Naive thymus-derived CD8-positive, alpha-beta T cell (primary cell): ENCODE measurements at regions of chr1 and their contacts with region 1.

Region 1: GRCh38 chr1:45011837-45012638 is at the start of gene UROD:
- DNase-seq: peak; percentile 75 to 95 (median 88)
- ATAC-seq: peak; percentile 75 to 83
- H3K4me3 Mint-ChIP-seq: peak within 1 kb of the TSS; percentile 81 to 97 (median 93)
- H3K27ac Mint-ChIP-seq: peak within 1 kb of the TSS; percentile 87 to 99 (median 95)
- H3K4me1 Mint-ChIP-seq: peaks cover 21 to 56% (median 49%) of the 10 kb centered on the region in 4 donors
- H3K27me3 Mint-ChIP-seq: no peaks in the 10 kb centered on the region
- polyA plus RNA-seq, gene UROD: 71.6 to 80.9 (median 74.9) TPM

Region 2: DNA sequence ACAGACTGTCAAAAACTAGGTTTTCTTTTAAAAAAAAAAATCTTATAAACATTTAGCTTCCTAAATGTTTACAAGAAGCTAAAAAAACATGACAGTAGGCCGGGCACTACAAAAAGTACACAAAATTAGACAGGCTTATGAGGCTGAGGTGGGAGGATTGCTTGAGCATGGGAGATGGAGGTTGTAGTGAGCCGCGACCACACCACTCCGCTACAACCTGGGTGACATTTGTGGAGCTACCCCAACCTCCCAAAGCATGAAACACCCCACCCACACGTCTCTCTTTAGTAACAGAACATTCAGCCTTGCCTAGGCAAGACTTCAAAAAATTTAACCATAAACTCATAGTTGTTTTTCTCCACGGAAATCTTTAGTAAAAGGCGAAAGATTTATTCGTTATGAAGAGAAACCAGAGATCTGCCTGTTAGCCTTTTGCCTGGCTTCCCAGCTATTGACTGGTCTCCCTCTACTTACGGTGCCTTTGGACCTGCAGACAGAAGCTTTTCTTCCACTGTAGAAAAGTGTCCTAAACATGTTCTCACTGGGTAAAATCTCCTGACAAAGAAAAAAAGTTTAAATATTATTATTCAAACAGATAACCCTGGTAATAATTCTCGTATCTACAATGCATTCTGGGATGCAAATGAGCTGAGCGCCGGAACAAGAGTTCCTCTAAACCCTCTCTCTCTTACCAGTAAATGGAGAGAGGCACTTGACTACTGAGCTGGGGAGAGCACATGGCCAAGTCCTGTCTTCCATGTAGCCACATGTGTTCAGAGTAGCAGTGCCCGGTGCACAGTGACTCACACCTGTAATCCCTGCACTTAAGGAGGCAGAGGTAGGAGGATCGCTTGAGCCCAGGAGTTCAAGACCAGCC is 290.3 kb before region 1 on chr1:
- POLR2A ChIA-PET with region 1: interaction called, 17 read pairs
- DNase-seq: peak; percentile 17 to 85 (median 74)
- ATAC-seq: peak; percentile 84 to 90
- H3K4me3 Mint-ChIP-seq: peak overlapping the region; percentile 42 to 85 (median 79)
- H3K27ac Mint-ChIP-seq: peak overlapping the region; percentile 93 to 99 (median 96)
- H3K4me1 Mint-ChIP-seq: peaks cover 50 to 80% (median 78%) of the 10 kb centered on the region in 4 donors
- H3K27me3 Mint-ChIP-seq: no peaks in the 10 kb centered on the region

Region 3: GRCh38 chr1:44786138-44786840 is 225.7 kb before region 1 on chr1:
- POLR2A ChIA-PET with region 1: interaction called, 35 read pairs
- DNase-seq: peak; percentile 64 to 91 (median 79)
- ATAC-seq: peak; percentile 75 to 77
- H3K4me3 Mint-ChIP-seq: peak overlapping the region; percentile 69 to 84 (median 80)
- H3K27ac Mint-ChIP-seq: peak overlapping the region; percentile 35 to 95 (median 88)
- H3K4me1 Mint-ChIP-seq: peaks cover 16 to 34% (median 30%) of the 10 kb centered on the region in 4 donors
- H3K27me3 Mint-ChIP-seq: no peaks in the 10 kb centered on the region

Region 4: DNA sequence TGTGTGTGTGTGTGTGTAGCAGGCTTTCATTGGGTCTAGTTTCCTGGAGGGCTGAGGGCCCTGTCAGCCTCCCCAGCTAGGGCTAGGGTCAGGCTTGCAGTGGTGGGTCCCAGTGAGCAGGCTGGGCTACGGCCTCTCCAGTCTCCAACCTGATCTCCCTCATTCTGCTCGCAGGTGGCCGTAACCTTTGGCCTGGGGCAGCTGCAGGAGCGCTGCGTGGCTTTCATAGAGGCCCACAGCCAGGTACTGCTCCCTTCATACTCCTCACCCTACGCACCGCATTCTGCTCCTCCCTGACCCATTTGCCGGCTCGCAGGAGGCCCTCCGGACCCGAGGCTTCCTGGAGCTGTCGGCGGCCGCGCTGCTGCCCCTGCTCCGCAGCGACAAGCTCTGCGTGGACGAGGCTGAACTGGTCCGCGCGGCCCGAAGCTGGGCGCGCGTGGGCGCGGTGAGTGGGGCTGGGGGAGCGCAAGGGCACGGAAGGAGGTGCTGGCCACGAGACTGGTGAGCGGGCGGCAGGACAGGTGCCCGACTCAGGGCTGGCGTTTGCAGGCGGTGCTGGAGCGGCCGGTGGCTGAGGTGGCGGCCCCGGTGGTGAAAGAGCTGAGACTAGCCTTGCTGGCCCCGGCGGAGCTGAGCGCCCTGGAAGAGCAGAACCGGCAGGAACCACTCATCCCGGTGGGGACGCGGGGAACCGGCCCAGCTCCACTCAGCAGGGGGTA is 199.1 kb before region 1 on chr1:
- POLR2A ChIA-PET with region 1: interaction called, 24 read pairs
- DNase-seq: peak in 1 of 10 donors; percentile 45
- ATAC-seq: no peak
- H3K4me3 Mint-ChIP-seq: peak overlapping the region in 5 of 10 donors; percentile 6 to 91 (median 30)
- H3K27ac Mint-ChIP-seq: peak overlapping the region in 9 of 10 donors; percentile 37 to 100 (median 99)
- H3K4me1 Mint-ChIP-seq: peaks cover 34 to 75% (median 72%) of the 10 kb centered on the region in 4 donors
- H3K27me3 Mint-ChIP-seq: no peaks in the 10 kb centered on the region

Region 5: DNA sequence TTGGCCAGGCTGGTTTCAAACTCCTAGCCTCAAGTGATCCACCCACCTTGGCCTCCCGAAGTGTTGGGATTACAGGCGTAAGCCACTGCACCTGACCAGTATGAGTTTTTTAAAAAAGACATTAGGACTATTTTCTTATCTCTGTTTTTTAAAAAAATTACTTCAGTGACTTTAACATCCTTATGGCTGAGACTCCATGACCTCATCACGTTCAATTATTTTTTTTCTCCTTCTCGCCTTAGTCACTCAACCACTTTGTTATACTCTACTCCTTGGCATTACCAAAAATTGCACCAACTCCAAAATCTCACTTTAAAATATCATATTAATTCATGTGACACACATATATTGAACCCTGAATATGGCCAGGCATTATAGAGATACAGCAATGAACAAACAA is 61.1 kb before region 1 on chr1:
- POLR2A ChIA-PET with region 1: no interaction called
- DNase-seq: no peak
- ATAC-seq: no peak
- H3K4me3 Mint-ChIP-seq: no peak overlapping the region
- H3K27ac Mint-ChIP-seq: no peak overlapping the region
- H3K4me1 Mint-ChIP-seq: peaks cover 9 to 18% (median 14%) of the 10 kb centered on the region in 4 donors
- H3K27me3 Mint-ChIP-seq: no peaks in the 10 kb centered on the region

Region 6: DNA sequence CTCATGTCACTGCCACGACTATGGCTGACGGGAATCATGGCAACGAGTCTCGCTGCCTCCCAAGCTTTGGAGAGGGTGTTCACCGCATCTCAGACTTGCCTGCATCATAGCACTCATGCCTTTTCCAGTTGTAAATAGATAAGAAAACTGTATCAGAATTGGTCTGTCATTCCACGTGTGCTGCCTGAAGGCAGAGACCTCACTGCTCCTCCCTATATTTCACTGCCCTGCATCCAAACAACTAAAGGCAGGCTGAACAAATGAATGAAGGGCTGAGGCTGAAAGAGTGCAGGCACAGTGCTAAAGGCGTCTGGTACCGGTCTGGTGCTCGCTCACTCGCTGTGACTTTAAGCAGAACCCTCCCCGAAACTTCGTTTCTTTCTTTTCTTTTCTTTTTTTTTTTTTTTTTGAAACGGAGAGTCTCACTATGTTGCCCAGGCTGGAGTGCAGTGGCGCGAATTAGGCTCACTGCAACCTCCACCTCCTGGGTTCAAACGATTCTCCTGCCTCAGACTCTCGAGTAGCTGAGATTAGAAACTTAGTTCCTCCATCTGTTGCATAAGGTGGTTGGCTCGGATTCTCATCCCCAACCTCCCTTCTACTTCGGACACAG is 26.2 kb before region 1 on chr1:
- POLR2A ChIA-PET with region 1: interaction called, 51 read pairs
- DNase-seq: no peak
- ATAC-seq: no peak
- H3K4me3 Mint-ChIP-seq: peak overlapping the region; percentile 94 to 100 (median 99)
- H3K27ac Mint-ChIP-seq: peak overlapping the region in 9 of 10 donors; percentile 88 to 97 (median 94)
- H3K4me1 Mint-ChIP-seq: peaks cover 9 to 27% (median 23%) of the 10 kb centered on the region in 4 donors
- H3K27me3 Mint-ChIP-seq: no peaks in the 10 kb centered on the region

Region 7: GRCh38 chr1:45026446-45026845 is 14.4 kb after region 1 on chr1:
- POLR2A ChIA-PET with region 1: no interaction called
- DNase-seq: no peak
- ATAC-seq: no peak
- H3K4me3 Mint-ChIP-seq: no peak overlapping the region
- H3K27ac Mint-ChIP-seq: no peak overlapping the region
- H3K4me1 Mint-ChIP-seq: no peaks in the 10 kb centered on the region
- H3K27me3 Mint-ChIP-seq: peaks cover 0 to 2% (median 0%) of the 10 kb centered on the region in 5 donors

Region 8: GRCh38 chr1:45490626-45491486 is 478.8 kb after region 1 on chr1 and contains the start of gene TESK2:
- POLR2A ChIA-PET with region 1: interaction called, 11 read pairs
- DNase-seq: peak; percentile 94 to 98 (median 97)
- ATAC-seq: peak; percentile 91 to 94
- H3K4me3 Mint-ChIP-seq: no peak within 1 kb of the TSS
- H3K27ac Mint-ChIP-seq: no peak within 1 kb of the TSS
- H3K4me1 Mint-ChIP-seq: peaks cover 6 to 13% (median 12%) of the 10 kb centered on the region in 4 donors
- H3K27me3 Mint-ChIP-seq: no peaks in the 10 kb centered on the region
- polyA plus RNA-seq, gene TESK2: 2.3 to 3.1 (median 2.7) TPM